ENCODE measurements at regions of chr19 and their contacts with region 1.

Region 1: DNA sequence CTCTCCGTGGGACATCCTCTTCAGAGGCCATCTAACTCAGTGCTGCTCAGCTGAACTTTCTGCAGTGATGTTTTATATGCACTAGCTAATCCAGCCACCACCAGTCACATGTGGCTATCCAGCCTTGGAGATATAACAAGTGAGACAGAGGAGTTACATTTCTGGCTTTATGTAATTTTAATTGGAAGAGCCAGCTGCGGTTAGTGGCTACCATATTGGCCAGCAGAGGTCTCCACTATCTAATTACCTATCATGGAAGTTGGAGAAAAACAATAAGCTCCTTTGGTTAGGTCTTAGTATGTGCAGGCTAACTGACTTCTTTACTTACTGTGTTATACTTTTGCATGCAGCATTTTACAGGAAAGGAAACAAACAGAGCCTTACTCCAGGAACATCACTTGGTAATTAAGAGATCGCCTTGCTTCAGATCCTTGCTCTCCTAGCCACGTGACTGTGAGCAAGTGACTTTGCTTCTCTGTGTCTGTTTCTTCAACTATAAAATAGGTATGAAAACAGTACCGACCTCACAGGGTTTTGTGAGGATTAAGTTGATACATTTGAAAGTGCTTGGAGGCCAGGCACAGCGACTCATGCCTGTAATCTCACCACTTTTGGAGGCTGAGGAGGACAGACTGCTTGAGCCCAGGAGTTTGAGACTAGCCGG is 1.6 kb upstream of the KLK10 start:
- DNase-seq: no peak
- H3K4me3 Mint-ChIP-seq: no peak overlapping the region
- H3K27ac Mint-ChIP-seq: no peak overlapping the region
- H3K4me1 Mint-ChIP-seq: peaks cover 12% of the 10 kb centered on the region
- H3K27me3 Mint-ChIP-seq: peaks cover 44% of the 10 kb centered on the region

Region 2: GRCh38 chr19:51166846-51167490 is 145.8 kb after region 1 on chr19:
- intact Hi-C with region 1: loop called (anchors 5 kb)
- DNase-seq: peak; percentile 28
- H3K4me3 Mint-ChIP-seq: peak overlapping the region; percentile 68
- H3K27ac Mint-ChIP-seq: no peak overlapping the region
- H3K4me1 Mint-ChIP-seq: peaks cover 36% of the 10 kb centered on the region
- H3K27me3 Mint-ChIP-seq: peaks cover 20% of the 10 kb centered on the region